ENCODE measurements at regions of chr12 and their contacts with region 1.

Region 1: GRCh38 chr12:121688966-121689365 is 19.5 kb upstream of the MORN3 start:
- DNase-seq: no peak
- H3K4me3 ChIP-seq: no peak overlapping the region
- H3K27ac ChIP-seq: no peak overlapping the region
- H3K4me1 ChIP-seq: peaks cover 4% of the 10 kb centered on the region; the same call in 1 of the 2 replicates
- H3K27me3 ChIP-seq: no peaks in the 10 kb centered on the region
- CTCF ChIP-seq: no peak

Region 2: GRCh38 chr12:121110211-121110940 is 578.6 kb before region 1 on chr12:
- CTCF ChIA-PET with region 1: no interaction called
- POLR2A ChIA-PET with region 1: no interaction called
- intact Hi-C with region 1: no loop called
- DNase-seq: peak; percentile 38 to 52
- H3K4me3 ChIP-seq: no peak overlapping the region
- H3K27ac ChIP-seq: no peak overlapping the region
- H3K4me1 ChIP-seq: peaks cover 7% of the 10 kb centered on the region
- H3K27me3 ChIP-seq: no peaks in the 10 kb centered on the region
- CTCF ChIP-seq: peak; percentile 97

Region 3: DNA sequence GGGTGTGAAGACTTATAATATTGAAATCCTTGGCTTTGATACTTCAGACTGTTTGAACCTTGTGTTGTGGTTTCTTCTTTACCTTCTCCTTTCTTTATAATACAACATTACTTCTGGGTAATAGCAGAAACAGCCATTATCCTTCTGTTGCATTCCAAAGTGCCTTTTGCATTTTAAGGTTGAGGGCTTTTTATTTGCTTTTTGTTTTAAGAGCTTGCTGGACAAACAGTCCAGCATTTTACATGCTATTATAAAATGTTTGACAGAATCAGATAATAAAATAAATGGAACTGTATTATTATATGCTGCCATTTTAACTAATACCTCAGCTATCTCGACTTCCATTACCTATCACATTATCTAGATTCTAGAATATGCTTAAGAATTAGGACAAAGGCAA is 275.0 kb before region 1 on chr12:
- CTCF ChIA-PET with region 1: no interaction called
- POLR2A ChIA-PET with region 1: interaction called, 10 read pairs
- intact Hi-C with region 1: no loop called
- DNase-seq: no peak
- H3K4me3 ChIP-seq: no peak overlapping the region
- H3K27ac ChIP-seq: no peak overlapping the region
- H3K4me1 ChIP-seq: no peaks in the 10 kb centered on the region
- H3K27me3 ChIP-seq: no peaks in the 10 kb centered on the region
- CTCF ChIP-seq: no peak

Region 4: GRCh38 chr12:121576851-121577391 is 112.0 kb before region 1 on chr12:
- CTCF ChIA-PET with region 1: no interaction called
- POLR2A ChIA-PET with region 1: no interaction called
- intact Hi-C with region 1: no loop called
- DNase-seq: peak; percentile 42 to 83
- H3K4me3 ChIP-seq: no peak overlapping the region; the same call in 1 of the 2 replicates
- H3K27ac ChIP-seq: peak overlapping the region; percentile 88
- H3K4me1 ChIP-seq: peaks cover 35% of the 10 kb centered on the region
- H3K27me3 ChIP-seq: no peaks in the 10 kb centered on the region
- CTCF ChIP-seq: no peak

Region 5: DNA sequence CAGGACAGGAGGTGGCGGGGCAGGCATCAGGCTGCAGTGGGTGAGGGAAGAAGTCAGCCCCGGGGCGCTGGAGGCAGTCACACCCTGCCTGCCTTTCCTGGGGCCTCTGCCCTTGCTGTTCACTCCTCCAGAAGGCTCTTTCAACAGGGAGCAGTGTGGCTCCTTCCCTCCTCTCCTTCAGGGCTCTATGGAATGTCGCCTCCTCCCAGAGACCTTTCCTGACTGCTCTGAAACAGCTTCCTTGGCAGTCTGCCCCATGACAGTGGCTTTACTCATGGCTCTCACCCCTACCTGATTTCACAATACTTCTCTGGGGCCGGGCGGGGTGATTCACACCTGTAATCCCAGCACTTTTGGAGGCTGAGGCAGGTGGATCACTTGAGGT is 97.5 kb after region 1 on chr12:
- CTCF ChIA-PET with region 1: no interaction called
- POLR2A ChIA-PET with region 1: no interaction called
- intact Hi-C with region 1: no loop called
- DNase-seq: peak; percentile 96 to 98
- H3K4me3 ChIP-seq: no peak overlapping the region
- H3K27ac ChIP-seq: peak overlapping the region; percentile 100
- H3K4me1 ChIP-seq: peaks cover 88% of the 10 kb centered on the region
- H3K27me3 ChIP-seq: no peaks in the 10 kb centered on the region
- CTCF ChIP-seq: no peak

Region 6: DNA sequence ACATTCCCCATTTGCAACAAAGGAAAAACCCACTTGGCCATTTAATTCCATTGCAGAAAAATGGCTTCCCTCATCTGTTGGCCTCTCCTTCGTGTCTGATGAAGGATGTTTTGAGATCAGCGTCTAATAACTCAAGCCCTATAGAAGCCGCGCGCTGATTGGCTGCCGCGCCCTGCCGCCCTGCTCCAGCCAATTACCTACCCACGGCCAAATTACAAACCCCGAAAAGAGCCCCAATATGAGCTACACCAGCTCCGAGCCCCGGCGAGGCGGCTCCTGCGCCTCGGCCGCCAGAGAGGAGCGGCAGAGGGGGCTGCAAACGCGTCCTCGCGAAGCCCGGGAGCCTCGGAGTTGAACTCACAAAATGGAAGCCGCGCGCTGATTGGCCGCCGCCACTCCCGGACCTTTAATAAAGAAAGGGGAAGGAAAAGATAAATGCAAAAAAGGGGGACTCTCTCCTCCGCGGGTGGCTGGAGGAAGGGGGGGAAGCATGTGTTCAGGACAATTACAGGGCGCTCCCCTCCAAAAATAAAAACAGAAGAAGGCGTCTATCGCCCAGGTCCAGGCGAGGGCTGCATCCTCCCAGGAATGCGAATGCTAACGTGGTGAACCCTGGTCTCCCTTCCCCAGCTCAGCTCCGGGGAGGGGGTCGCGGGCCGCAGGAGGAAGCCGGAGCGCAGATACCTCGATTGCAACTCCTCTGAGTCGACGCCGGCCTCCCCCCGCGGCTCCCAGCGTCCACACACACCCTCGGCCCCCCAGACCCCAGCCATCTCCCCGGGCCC is 114.1 kb after region 1 on chr12:
- CTCF ChIA-PET with region 1: no interaction called
- POLR2A ChIA-PET with region 1: interaction called, 18 read pairs
- intact Hi-C with region 1: no loop called
- DNase-seq: peak; percentile 88 to 92
- H3K4me3 ChIP-seq: peak overlapping the region; percentile 83
- H3K27ac ChIP-seq: peak overlapping the region; percentile 100
- H3K4me1 ChIP-seq: peaks cover 31% of the 10 kb centered on the region
- H3K27me3 ChIP-seq: no peaks in the 10 kb centered on the region
- CTCF ChIP-seq: no peak

Region 7: GRCh38 chr12:121812921-121813896 is 124.2 kb after region 1 on chr12:
- CTCF ChIA-PET with region 1: no interaction called
- POLR2A ChIA-PET with region 1: no interaction called
- intact Hi-C with region 1: no loop called
- DNase-seq: no peak
- H3K4me3 ChIP-seq: no peak overlapping the region; the same call in 1 of the 2 replicates
- H3K27ac ChIP-seq: no peak overlapping the region
- H3K4me1 ChIP-seq: peaks cover 10% of the 10 kb centered on the region
- H3K27me3 ChIP-seq: no peaks in the 10 kb centered on the region
- CTCF ChIP-seq: no peak